ENCODE measurements at regions of chr13 and their contacts with region 1.

Region 1: DNA sequence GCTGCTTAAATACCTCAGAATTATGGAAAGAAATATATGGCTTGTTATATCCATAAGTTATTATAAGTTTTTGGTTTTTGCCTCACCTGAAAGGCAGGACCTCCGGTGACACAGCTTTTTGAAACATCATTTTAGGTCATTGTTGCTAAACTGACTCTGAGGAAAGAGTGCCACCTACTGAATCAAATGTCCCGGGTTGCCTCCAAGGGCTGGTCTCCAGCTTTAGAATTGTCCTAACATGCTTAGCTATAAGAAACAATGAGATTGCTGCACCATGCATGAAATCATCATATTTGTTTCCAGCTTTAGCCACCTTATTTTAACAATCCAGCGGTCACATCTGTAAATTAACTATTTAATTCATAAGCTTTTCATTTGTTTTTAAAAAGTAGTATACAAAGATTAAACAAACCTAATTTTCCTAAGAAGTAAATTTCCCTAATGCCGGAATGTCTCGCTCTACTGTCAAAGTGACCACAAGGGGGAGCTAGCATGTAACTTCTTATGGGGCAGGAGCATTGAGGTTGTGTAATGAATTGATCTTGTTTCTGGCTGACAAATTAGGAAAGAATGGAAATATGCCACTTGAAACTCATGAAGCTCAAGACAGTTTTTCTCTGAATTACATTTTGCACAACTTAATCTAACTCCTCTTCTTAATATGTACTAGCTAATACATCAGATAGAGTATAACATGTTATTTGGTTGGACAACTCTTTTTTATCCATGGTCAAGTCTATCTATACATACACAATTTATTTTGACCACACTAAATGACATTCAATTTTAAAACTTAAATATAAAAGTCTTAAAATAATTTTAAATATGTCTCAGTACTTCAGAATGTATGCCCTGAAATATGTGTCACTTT is 6.7 kb upstream of the PCDH17 start:
- DNase-seq: peak; percentile 64
- ATAC-seq: peak; percentile 73
- H3K4me3 ChIP-seq: no peak overlapping the region
- H3K27ac ChIP-seq: no peak overlapping the region
- H3K4me1 ChIP-seq: no peaks in the 10 kb centered on the region
- H3K27me3 ChIP-seq: peaks cover 16% of the 10 kb centered on the region
- CTCF ChIP-seq: peak; percentile 78

Region 2: DNA sequence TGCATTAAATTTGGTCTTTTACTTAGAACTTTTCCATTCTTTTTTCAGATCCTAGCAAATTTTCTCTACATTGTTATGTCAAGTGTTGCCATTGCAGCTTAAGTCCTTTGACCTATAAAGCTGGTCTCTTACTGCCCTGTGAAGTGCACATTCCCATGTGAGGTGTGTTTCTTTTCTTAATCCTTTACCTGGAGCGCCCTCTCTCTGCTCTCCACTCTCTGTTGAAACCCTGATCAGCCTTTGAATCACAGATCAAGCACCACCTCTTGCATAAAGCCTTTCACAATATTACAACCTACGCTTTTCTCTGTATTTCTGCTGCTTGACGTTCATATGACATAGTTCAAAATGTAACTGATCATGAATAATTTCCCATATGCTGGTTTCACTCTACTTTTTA is 91.5 kb after region 1 on chr13:
- CTCF ChIA-PET with region 1: interaction called, 6 read pairs
- POLR2A ChIA-PET with region 1: no interaction called
- intact Hi-C with region 1: loop called (anchors 5 kb)
- DNase-seq: no peak
- ATAC-seq: 0 out of 2 replicates have a peak, but pooled peaks have one; percentile 48
- H3K4me3 ChIP-seq: no peak overlapping the region
- H3K27ac ChIP-seq: no peak overlapping the region
- H3K4me1 ChIP-seq: no peaks in the 10 kb centered on the region
- H3K27me3 ChIP-seq: no peaks in the 10 kb centered on the region
- CTCF ChIP-seq: no peak; the same call in 1 of the 2 replicates

Region 3: DNA sequence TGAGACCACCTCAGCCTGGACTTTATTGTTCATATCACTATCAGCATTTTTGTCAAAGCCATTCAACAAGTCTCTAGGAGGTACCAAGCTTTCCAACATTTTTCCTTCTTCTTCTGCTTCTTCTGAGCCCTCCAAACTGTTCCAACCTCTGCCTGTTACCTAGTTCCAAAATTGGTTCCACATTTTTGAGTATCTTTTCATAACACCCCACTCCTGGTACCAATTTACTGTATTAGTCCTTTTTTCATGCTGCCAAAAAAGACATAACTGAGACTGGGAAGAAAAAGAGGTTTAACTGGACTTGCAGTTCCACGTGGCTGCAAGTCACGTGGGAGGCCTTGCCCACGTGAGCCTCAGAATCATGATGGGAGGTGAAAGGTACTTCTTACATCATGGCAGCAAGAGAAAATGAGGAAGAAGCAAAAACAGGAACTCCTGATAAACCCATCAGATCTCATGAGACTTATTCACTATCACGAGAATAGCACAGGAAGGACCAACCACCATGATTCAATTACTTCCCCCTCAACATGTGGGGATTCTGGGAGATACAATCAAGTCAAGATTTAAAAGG is 221.9 kb after region 1 on chr13:
- CTCF ChIA-PET with region 1: no interaction called
- POLR2A ChIA-PET with region 1: no interaction called
- intact Hi-C with region 1: no loop called
- DNase-seq: no peak
- ATAC-seq: no peak
- H3K4me3 ChIP-seq: no peak overlapping the region
- H3K27ac ChIP-seq: no peak overlapping the region
- H3K4me1 ChIP-seq: no peaks in the 10 kb centered on the region
- H3K27me3 ChIP-seq: no peaks in the 10 kb centered on the region
- CTCF ChIP-seq: no peak

Region 4: DNA sequence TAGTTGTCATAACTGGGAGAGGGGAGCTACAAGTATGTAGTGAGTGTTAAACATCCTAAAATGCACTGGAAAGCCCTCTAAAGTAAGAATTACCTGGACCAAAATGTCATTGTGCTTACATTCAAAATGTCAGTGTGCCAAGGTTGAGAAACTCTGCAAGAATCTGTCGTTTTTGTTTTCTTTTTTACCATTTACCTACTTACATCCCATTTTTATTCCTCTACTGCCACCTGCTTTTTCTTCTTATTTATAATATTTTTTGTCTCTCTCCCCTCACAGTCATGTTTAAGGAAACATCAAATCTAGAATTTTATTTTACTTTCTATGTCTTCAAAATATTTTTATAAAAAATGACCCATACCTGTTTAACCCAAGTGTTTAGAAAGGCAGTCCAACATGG is 233.1 kb after region 1 on chr13:
- CTCF ChIA-PET with region 1: no interaction called
- POLR2A ChIA-PET with region 1: no interaction called
- intact Hi-C with region 1: loop called (anchors 5 kb)
- DNase-seq: no peak
- ATAC-seq: no peak
- H3K4me3 ChIP-seq: no peak overlapping the region
- H3K27ac ChIP-seq: no peak overlapping the region
- H3K4me1 ChIP-seq: no peaks in the 10 kb centered on the region
- H3K27me3 ChIP-seq: no peaks in the 10 kb centered on the region
- CTCF ChIP-seq: no peak

Region 5: DNA sequence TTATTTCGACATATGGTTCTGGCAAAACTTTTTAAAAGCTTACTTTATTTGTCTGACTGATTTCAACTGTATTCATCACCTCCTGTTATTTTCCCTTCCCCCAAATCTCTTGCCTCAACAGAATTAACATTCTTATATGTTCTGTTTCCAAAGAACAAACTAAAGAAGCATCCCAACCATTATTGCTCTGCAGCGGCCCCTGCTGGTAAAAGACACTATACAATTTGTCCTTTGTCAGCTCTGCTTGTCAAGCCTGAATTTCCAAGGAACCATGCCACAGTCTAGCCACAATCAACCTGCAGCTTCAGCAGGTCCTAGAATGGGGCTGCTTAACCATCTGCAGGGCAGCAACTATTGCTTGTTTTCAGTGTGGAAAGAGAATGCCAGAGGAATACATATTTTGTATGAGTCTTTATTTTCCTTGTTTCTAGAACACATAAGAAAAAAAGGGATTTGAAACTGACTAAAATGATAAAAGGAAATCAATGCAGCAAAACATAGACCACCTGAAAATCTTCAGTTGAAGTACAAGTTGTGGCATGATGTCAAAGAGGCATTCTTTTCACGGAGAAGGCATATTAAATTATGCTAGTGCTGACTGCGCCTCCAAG is 1693.6 kb after region 1 on chr13:
- CTCF ChIA-PET with region 1: no interaction called
- POLR2A ChIA-PET with region 1: no interaction called
- intact Hi-C with region 1: loop called (anchors 10 kb)
- DNase-seq: peak; percentile 65
- ATAC-seq: peak; percentile 38; the same call in 1 of the 2 replicates
- H3K4me3 ChIP-seq: no peak overlapping the region
- H3K27ac ChIP-seq: no peak overlapping the region
- H3K4me1 ChIP-seq: no peaks in the 10 kb centered on the region
- H3K27me3 ChIP-seq: 0 out of 2 replicates have a peak, but pooled peaks cover 4% of the 10 kb centered on the region
- CTCF ChIP-seq: peak; percentile 72